Cardiac septum (tissue), 1 donor: ENCODE measurements at regions of chr4 and their contacts with region 1.

Region 1: GRCh38 chr4:1207603-1208265 is 35.4 kb upstream of the SPON2 start:
- DNase-seq: peak; percentile 77

Region 2: DNA sequence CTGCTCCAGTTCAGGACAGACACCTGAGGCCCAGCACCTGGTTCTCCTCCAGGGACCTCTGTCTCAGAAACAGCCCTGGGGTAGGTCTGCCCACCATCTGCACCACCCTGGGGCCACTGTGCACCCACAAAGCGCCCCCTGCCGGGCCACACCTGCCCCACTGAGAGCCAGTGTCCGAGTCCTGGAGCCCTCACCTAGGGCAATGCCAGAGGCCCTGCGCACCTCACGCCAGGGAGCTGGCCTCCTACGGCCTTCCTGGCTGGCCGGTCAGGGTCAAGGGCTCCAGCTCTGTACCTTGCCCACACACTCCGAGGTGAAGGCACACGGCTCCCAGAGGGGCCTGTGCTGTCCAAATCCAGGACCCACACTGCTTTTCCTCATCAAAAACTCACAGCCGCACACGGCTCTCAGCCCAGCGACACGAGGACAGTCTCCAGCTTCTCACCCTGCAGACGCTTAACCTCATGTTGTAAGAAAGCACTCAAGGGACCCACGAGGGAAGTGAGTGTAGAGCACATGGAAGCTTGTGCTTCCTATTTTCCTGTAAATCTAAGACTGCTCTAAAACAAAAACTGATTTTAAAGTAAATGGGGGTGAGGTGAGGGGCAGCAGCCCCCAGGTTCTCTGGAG is 35.8 kb after region 1 on chr4:
- intact Hi-C with region 1: loop called (anchors 2 kb)
- DNase-seq: no peak